H1 (cell line): ENCODE measurements at regions of chr17 and their contacts with region 1.

Region 1: GRCh38 chr17:3695723-3696411 is at the start of gene P2RX5:
- DNase-seq: peak in 1 of 2 experiments; percentile 79
- H3K4me3 ChIP-seq: peak within 1 kb of the TSS; percentile 47 to 70 (median 61)
- H3K27ac ChIP-seq: no peak within 1 kb of the TSS
- H3K4me1 ChIP-seq: peaks cover 0 to 14% (median 8%) of the 10 kb centered on the region in 4 experiments; a peak in 5 of 7 replicates
- H3K27me3 ChIP-seq: peaks cover 0 to 22% (median 13%) of the 10 kb centered on the region in 4 experiments; a peak in 6 of 7 replicates
- CTCF ChIP-seq: no peak
- EP300 ChIP-seq: no peak
- POLR2A ChIP-seq: no peak
- RAD21 ChIP-seq: no peak
- total RNA-seq, gene P2RX5: 15.5 and 15.6 TPM in 2 replicates

Region 2: DNA sequence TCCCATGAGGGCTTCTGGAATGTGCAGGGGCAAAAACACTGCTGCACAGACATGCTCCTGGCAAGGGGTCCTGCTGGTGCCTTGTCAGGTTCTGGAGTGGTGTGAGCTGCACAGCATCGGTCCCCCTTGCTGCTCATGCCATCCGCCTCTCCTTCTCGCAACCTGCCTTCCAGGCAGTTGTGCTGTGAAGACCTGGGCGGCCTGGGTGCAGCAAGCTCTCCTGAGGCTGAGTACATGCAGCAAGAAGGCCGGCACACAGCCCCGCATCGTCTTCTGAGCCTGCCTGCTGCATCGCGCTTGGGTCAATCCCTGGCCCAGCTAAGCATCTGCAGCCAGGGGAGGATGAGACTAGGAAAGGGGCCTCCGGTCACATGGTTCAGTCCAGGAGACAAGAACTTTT is 86.2 kb before region 1 on chr17:
- CTCF ChIA-PET with region 1: no interaction called
- POLR2A ChIA-PET with region 1: no interaction called
- DNase-seq: no peak
- H3K4me3 ChIP-seq: no peak overlapping the region
- H3K27ac ChIP-seq: no peak overlapping the region
- H3K4me1 ChIP-seq: no peaks in the 10 kb centered on the region
- H3K27me3 ChIP-seq: no peaks in the 10 kb centered on the region
- CTCF ChIP-seq: no peak
- EP300 ChIP-seq: no peak
- POLR2A ChIP-seq: no peak
- RAD21 ChIP-seq: no peak

Region 3: GRCh38 chr17:3668279-3669085 is 27.4 kb before region 1 on chr17 and contains the starts of genes EMC6 and TAX1BP3:
- CTCF ChIA-PET with region 1: interaction called, 6 read pairs
- POLR2A ChIA-PET with region 1: interaction called, 10 read pairs
- DNase-seq: peak; percentile 95 to 100
- H3K4me3 ChIP-seq: peak within 1 kb of the TSS; percentile 79 to 94 (median 84)
- H3K27ac ChIP-seq: peak within 1 kb of the TSS; percentile 90
- H3K4me1 ChIP-seq: peaks cover 3 to 7% (median 5%) of the 10 kb centered on the region in 4 experiments
- H3K27me3 ChIP-seq: no peaks in the 10 kb centered on the region
- CTCF ChIP-seq: no peak
- EP300 ChIP-seq: no peak
- POLR2A ChIP-seq: peak; percentile 88 to 91
- RAD21 ChIP-seq: no peak
- total RNA-seq, gene EMC6: 81.5 and 86.5 TPM in 2 replicates
- total RNA-seq, gene TAX1BP3: 81.8 and 83.5 TPM in 2 replicates

Region 4: DNA sequence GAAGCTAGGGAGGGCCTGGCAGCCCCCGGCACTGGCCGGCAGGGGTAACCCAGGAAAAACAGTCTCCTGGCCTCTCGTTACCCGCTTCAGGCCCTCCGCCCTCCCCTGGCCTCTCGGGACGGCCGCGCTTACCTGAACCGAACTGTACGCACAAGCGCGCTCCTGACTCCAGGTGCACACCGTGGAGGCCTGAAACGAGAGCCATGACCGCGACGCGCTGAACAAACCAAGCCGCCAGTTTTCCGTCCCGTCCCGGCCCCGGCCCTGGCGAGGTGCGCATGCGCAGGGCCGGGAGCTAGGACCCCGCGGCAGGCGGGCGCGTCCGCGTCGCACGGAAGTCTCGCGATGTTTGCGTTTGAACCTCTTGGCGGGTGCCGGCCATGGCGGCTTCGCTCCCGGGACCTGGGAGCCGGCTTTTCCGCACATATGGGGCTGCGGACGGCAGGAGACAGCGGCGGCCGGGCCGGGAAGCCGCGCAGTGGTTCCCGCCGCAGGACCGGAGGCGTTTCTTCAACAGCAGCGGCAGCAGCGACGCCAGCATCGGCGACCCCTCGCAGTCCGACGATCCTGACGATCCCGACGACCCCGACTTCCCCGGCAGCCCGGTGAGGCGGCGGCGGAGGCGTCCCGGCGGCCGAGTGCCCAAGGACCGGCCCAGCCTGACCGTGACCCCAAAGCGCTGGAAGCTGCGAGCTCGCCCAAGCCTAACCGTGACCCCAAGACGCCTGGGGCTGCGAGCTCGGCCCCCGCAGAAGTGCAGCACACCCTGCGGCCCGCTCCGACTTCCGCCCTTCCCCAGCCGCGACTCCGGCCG is 27.9 kb after region 1 on chr17 and contains the start of gene HASPIN:
- CTCF ChIA-PET with region 1: interaction called, 5 read pairs
- POLR2A ChIA-PET with region 1: interaction called, 13 read pairs
- DNase-seq: peak; percentile 70 to 95
- H3K4me3 ChIP-seq: peak within 1 kb of the TSS; percentile 67 to 84 (median 75)
- H3K27ac ChIP-seq: peak within 1 kb of the TSS; percentile 71
- H3K4me1 ChIP-seq: peaks cover 0 to 13% (median 8%) of the 10 kb centered on the region in 4 experiments; a peak in 4 of 7 replicates
- H3K27me3 ChIP-seq: no peaks in the 10 kb centered on the region
- CTCF ChIP-seq: peak in 2 of 3 experiments; percentile 4 to 17; a peak in 2 of 4 replicates
- EP300 ChIP-seq: no peak
- POLR2A ChIP-seq: peak; percentile 88 to 89
- RAD21 ChIP-seq: no peak
- total RNA-seq, gene HASPIN: 29.4 and 29.5 TPM in 2 replicates

Region 5: GRCh38 chr17:3732210-3732621 is 36.3 kb after region 1 on chr17:
- CTCF ChIA-PET with region 1: interaction called, 10 read pairs
- POLR2A ChIA-PET with region 1: interaction called, 3 read pairs
- DNase-seq: no peak
- H3K4me3 ChIP-seq: no peak overlapping the region
- H3K27ac ChIP-seq: no peak overlapping the region
- H3K4me1 ChIP-seq: peaks cover 0 to 6% (median 0%) of the 10 kb centered on the region in 4 experiments; a peak in 2 of 7 replicates
- H3K27me3 ChIP-seq: no peaks in the 10 kb centered on the region
- CTCF ChIP-seq: no peak
- EP300 ChIP-seq: no peak
- POLR2A ChIP-seq: no peak
- RAD21 ChIP-seq: no peak; a peak in 1 of 4 replicates